Breast epithelium (tissue), 4 donors: ENCODE measurements at regions of chr9 and their contacts with region 1.

Region 1: DNA sequence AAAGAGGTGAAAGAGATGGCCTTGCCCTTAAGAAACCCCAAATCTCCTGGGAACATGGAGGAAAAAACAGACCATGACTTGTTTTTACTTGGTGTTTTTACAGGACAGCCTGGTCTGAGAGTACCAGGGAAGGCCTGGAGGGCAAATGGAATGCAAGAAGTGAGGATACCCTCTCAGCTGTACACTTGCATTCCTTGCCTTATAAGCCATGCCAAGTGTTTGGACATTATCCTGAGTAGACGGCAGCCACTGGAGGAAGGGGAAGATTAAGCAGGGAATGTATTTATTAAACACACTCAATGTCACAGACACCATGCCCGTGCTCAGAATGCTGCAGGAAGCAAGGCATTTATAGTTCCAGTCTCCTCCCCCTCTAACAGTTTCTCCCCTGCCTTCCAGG is 581.4 kb downstream of the CDK5RAP2 start:
- DNase-seq: no peak
- H3K4me3 ChIP-seq: no peak overlapping the region
- H3K27ac ChIP-seq: no peak overlapping the region
- H3K4me1 ChIP-seq: no peaks in the 10 kb centered on the region
- H3K27me3 ChIP-seq: no peaks in the 10 kb centered on the region
- CTCF ChIP-seq: no peak
- POLR2A ChIP-seq: no peak

Region 2: GRCh38 chr9:119391878-119392277 is 606.7 kb before region 1 on chr9:
- intact Hi-C with region 1: loop called (anchors 5 kb)
- DNase-seq: no peak
- H3K4me3 ChIP-seq: no peak overlapping the region
- H3K27ac ChIP-seq: no peak overlapping the region
- H3K4me1 ChIP-seq: no peaks in the 10 kb centered on the region
- H3K27me3 ChIP-seq: no peaks in the 10 kb centered on the region
- CTCF ChIP-seq: no peak
- POLR2A ChIP-seq: no peak

Region 3: DNA sequence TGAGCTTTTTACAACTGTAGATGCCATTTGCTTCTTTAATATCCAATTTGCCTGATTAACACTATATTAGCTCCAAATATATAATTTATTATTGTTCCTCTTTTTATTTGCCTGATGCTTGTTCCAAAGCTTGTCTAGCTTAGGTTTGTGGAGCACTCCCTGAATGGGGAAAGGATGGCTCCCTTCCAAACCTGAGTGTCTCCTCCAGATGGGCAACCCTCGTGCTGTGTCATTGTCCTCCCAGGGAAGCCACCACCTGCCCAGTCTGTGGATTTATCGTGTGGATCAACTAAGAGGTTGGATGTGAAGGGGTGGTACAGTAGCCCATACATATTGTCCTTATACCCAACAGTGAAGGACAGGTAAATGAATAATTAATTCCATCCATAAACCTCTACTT is 176.4 kb after region 1 on chr9:
- intact Hi-C with region 1: no loop called
- DNase-seq: no peak
- H3K4me3 ChIP-seq: no peak overlapping the region
- H3K27ac ChIP-seq: no peak overlapping the region
- H3K4me1 ChIP-seq: no peaks in the 10 kb centered on the region
- H3K27me3 ChIP-seq: no peaks in the 10 kb centered on the region
- CTCF ChIP-seq: no peak
- POLR2A ChIP-seq: no peak

Region 4: DNA sequence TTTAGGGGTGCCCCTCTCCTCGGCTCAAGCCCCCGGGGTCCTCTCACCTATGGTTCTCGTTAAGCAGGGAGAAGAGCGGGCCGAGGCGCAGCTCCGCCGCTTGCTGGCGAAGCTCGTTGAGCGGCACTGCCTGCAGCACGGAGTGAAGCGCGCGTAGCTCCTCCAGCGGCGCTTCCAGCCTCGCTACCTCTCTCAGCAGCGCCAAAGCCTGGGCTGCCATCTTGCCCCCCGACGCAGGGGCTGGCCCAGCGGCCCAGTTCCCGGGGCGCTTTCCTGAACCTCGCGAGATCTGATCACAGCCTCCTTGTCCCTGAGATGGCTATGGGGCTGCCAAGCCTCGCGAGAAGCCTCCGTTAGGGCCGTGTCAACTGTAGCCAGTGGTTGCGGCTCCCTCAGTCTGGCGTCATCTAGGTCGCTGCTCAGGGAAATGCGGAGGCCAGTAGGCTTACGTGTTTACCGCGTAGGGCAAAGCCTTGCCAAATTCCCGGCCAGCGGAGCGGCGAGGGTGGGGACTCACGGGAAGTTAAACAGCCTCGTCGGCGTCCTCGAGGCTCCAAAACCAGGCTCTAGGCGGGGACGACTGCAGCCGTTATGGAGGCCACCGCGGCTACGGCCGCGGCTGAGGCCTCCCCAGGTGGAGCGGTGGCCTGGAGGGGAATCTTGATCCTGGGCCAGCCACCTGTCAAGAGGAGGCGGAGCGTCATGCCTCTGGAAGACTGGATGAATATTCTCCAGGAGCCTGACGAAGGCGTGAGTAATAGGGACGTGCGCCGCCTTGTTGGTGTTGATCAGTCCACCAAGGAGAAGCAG is 844.3 kb after region 1 on chr9 and contains the start of gene PSMD5:
- intact Hi-C with region 1: no loop called
- DNase-seq: peak; percentile 97
- H3K4me3 ChIP-seq: peak within 1 kb of the TSS; percentile 67 to 94 (median 71)
- H3K27ac ChIP-seq: peak within 1 kb of the TSS; percentile 94 to 95
- H3K4me1 ChIP-seq: no peaks in the 10 kb centered on the region
- H3K27me3 ChIP-seq: no peaks in the 10 kb centered on the region
- CTCF ChIP-seq: no peak
- POLR2A ChIP-seq: no peak
- total RNA-seq, gene PSMD5: 48.3 to 54.1 (median 50.3) TPM